OCI-LY7 (cell line): ENCODE measurements at regions of chr13 and their contacts with region 1.

Region 1: DNA sequence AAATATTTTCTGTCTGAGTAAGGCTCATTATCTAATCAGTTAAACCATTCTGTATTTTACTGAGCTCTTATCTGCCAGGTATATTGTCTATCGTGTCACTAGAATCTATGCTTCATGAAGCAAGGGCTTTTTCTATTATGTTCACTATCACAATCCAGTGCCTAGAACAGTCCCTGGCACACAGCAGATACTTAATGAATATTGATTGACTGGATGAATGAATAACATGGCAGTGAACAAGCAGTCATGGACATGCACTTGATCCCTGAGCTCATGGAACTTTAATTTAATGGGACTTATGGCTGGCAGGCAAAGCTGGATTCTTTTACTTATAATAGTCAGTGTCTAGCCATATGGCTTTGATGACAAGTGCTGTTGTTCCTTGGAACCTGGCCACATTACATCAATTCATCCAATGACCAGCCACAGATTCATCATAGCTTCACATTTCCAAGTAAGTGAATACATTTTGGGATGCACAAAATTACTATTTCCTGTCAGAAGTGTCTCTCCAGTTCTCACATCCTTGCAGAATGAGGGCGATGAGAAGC is 214.8 kb downstream of the COG6 start:
- DNase-seq: no peak
- H3K4me3 ChIP-seq: no peak overlapping the region
- H3K27ac ChIP-seq: no peak overlapping the region
- H3K4me1 ChIP-seq: no peaks in the 10 kb centered on the region
- CTCF ChIP-seq: no peak

Region 2: GRCh38 chr13:39655569-39656324 is 214.5 kb before region 1 on chr13 and contains the start of gene COG6:
- CTCF ChIA-PET with region 1: no interaction called
- POLR2A ChIA-PET with region 1: no interaction called
- intact Hi-C with region 1: no loop called
- DNase-seq: peak; percentile 91
- H3K4me3 ChIP-seq: peak within 1 kb of the TSS; percentile 87
- H3K27ac ChIP-seq: no peak within 1 kb of the TSS
- H3K4me1 ChIP-seq: peaks cover 13% of the 10 kb centered on the region
- CTCF ChIP-seq: peak; percentile 38; the same call in 1 of the 2 replicates
- total RNA-seq, gene COG6: 20.1 and 30.1 TPM in 2 replicates

Region 3: DNA sequence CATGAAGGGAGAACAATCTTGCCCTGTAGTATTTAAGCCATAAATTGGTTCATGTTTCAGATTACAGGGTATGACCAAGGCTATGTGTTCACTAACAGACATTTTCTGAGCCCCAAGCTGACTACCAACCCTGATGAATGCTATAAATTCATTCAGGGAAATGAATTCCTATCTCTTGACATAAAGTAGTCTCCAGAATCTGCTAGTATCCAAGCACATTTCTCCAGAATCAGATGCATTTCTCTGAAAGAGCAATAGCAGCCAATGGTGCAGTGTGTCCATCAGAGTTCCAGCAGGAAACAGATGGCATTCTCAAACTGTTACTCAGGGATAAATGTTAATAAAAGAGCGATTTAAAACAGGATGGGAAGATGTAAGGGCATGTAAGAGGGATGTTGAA is 11.6 kb after region 1 on chr13:
- CTCF ChIA-PET with region 1: no interaction called
- POLR2A ChIA-PET with region 1: interaction called, 10 read pairs
- intact Hi-C with region 1: no loop called
- DNase-seq: no peak
- H3K4me3 ChIP-seq: no peak overlapping the region
- H3K27ac ChIP-seq: no peak overlapping the region
- H3K4me1 ChIP-seq: no peaks in the 10 kb centered on the region
- CTCF ChIP-seq: no peak